Activated CD4-positive, alpha-beta T cell treated with anti-CD3 and anti-CD28 coated beads, Interleukin-2, amount 10 ng/mL, durations not matched to agents 7 days and 5 days (primary cell): ENCODE measurements at regions of chr3 and their contacts with region 1.

Region 1: DNA sequence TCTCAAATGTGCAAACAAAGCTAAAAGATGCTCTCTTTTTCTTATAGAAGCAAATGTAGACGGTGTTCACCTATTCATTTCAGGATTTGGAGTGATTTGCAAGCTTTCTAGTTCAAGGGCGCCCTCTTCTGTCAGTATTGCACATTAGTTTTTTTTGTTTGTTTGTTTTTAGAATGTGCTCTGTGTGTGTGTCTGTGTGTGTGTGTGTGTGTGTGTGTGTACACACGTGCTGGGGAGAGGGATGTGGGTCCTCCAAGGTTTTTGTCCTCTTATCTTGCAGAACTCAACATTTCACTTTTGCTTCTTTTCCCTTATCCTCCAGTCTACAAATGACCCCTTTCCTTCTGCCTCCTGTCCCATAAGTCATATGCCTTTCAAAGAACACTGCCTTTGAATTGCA is 23.5 kb downstream of the DNAH1 start:
- DNase-seq: peak; percentile 77
- H3K4me3 Mint-ChIP-seq: no peak overlapping the region
- H3K27ac Mint-ChIP-seq: no peak overlapping the region
- H3K4me1 Mint-ChIP-seq: peaks cover 13% of the 10 kb centered on the region
- H3K27me3 Mint-ChIP-seq: no peaks in the 10 kb centered on the region

Region 2: DNA sequence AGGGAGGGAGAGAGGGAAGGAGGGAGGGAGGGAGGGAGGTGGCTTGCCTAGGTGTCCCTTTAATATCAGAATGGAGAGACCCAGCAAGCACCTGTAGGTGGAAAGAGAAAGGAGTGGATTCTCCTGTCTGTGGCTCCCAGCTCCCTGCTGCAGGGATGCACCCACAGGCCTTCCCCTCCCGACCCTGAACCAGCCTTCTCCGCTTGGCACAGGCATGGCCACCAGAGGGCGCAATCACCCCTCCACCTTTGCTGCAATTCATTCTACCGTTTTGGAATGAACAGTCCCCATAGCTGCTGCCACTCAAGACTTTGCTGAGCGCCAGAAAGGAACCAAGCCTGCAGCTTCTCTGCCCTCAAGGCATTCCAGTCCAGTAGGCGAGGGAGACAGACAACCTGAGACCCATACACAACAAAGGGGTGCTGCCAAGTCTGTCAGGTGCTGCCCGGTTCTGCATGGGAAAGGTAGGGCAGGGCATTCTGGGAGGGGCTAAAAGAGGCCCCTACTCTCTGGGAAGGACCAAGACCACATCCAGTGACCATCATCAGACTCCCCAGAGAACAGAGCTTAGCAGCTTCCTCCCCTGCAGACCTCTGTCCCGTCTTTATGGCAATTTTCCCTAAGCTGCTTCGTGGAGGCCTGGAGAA is 119.1 kb before region 1 on chr3:
- CTCF ChIA-PET with region 1: interaction called, 91 read pairs
- POLR2A ChIA-PET with region 1: no interaction called
- DNase-seq: peak; percentile 91
- H3K4me3 Mint-ChIP-seq: peak overlapping the region; percentile 48
- H3K27ac Mint-ChIP-seq: peak overlapping the region; percentile 80
- H3K4me1 Mint-ChIP-seq: peaks cover 95% of the 10 kb centered on the region
- H3K27me3 Mint-ChIP-seq: no peaks in the 10 kb centered on the region

Region 3: DNA sequence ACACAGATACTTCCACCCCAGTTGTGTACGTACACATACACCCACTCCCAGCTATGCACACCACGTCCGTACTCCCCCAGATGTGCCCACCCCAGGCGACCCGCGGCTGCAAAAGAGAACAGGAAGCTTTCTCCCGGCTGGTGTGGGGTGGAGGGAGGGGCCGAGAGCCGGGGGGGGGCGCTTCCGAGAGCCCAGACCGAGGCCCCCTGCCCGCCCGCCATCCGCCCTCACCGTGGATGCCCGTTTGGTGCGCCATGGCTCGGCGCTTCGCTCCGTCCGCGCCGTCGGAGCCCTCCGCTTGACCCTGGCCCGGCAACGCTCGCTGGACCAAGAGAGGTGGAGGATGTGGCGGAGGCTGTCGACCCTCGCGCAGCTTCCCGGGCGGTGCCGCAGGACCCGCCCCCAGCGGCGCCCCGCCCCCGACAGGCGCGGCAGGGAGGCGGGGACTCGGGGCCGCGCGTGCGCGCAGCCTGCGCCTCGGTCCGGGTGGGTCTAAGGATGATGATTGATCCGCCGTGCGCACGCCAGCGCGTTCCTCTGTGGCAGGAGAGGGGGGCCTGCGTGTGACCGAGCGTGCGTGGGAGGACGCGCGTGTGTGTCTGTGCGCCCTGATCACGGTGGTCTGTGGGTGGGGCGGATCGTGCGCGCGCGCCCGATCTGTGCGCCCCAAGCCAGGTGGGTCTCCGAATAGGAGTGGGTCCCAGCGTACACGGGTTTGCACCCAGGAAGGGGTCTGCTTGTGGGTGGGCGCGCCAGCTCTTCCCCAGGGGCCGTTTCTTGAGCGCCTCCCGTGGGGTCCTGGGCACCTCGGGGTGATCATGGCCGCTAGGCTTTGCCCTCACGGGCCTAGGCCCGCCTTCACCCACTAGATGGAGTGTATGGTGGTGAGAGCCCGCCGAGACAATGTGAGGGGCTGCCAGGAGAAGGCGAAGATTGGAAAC is 100.6 kb before region 1 on chr3 and contains the start of gene TWF2:
- CTCF ChIA-PET with region 1: interaction called, 42 read pairs
- POLR2A ChIA-PET with region 1: no interaction called
- DNase-seq: peak; percentile 84
- H3K4me3 Mint-ChIP-seq: peak within 1 kb of the TSS; percentile 86
- H3K27ac Mint-ChIP-seq: peak within 1 kb of the TSS; percentile 94
- H3K4me1 Mint-ChIP-seq: peaks cover 76% of the 10 kb centered on the region
- H3K27me3 Mint-ChIP-seq: no peaks in the 10 kb centered on the region
- total RNA-seq, gene TWF2: 117 to 119 TPM

Region 4: DNA sequence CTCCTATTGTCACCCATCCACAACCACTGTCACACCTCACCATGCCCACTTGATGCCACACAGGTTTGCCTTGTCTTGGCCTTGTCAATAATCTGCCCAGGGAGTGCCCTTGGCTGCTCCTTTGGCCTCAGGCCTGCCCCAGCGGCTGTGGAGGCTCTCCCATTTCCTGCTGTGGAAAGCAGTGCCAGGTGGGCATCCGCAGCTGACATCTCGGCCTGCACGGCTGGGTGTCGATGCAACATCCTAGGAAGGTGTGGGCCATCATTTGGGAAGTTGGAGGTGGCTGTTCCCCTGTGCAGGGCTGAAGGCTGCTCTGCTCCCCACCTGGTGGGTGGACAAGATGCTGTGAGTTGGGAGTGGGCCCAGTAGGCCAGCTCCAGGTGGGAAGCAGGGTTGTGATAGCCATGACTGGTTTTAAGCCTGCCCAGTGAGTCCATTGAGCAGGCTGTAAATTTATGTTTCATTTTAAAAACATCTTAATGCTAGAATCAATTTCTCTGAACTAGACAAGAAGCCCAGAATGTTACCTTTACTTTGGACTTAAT is 11.0 kb before region 1 on chr3:
- CTCF ChIA-PET with region 1: interaction called, 13 read pairs
- POLR2A ChIA-PET with region 1: no interaction called
- DNase-seq: no peak
- H3K4me3 Mint-ChIP-seq: no peak overlapping the region
- H3K27ac Mint-ChIP-seq: no peak overlapping the region
- H3K4me1 Mint-ChIP-seq: no peaks in the 10 kb centered on the region
- H3K27me3 Mint-ChIP-seq: no peaks in the 10 kb centered on the region

Region 5: DNA sequence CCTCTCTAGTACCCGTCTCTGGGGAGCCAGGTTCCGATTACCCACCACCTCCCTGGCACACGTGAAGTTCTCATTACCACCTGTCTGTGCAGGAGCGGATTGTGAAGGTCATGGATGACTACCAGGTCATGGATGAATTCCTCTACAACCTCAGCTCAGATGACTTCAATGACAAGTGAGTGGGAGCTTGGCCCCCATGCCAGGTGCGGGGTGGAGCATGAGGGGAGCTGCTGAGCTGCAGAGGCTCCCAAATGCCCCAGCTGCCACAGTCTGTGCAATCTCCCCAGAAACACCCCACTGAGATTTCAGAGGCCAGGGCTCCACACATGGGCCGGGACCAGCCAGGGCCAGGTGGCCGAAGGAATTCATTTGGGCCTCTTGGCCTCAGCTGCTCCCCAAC is 10.8 kb after region 1 on chr3:
- CTCF ChIA-PET with region 1: interaction called, 19 read pairs
- POLR2A ChIA-PET with region 1: interaction called, 6 read pairs
- DNase-seq: no peak
- H3K4me3 Mint-ChIP-seq: no peak overlapping the region
- H3K27ac Mint-ChIP-seq: no peak overlapping the region
- H3K4me1 Mint-ChIP-seq: no peaks in the 10 kb centered on the region
- H3K27me3 Mint-ChIP-seq: no peaks in the 10 kb centered on the region

Region 6: GRCh38 chr3:52845691-52846431 is 506.2 kb after region 1 on chr3:
- CTCF ChIA-PET with region 1: no interaction called
- POLR2A ChIA-PET with region 1: no interaction called
- DNase-seq: no peak
- H3K4me3 Mint-ChIP-seq: no peak overlapping the region
- H3K27ac Mint-ChIP-seq: peak overlapping the region; percentile 38
- H3K4me1 Mint-ChIP-seq: peaks cover 18% of the 10 kb centered on the region
- H3K27me3 Mint-ChIP-seq: no peaks in the 10 kb centered on the region